HCT116 (cell line): ENCODE measurements at regions of chr12 and their contacts with region 1.

Region 1: GRCh38 chr12:98698603-98699463 is 53.7 kb downstream of the APAF1 start:
- DNase-seq: peak; percentile 31
- ATAC-seq: peak; percentile 98
- H3K4me3 ChIP-seq: no peak overlapping the region
- H3K27ac ChIP-seq: no peak overlapping the region
- H3K4me1 ChIP-seq: no peaks in the 10 kb centered on the region
- H3K27me3 ChIP-seq: no peaks in the 10 kb centered on the region
- CTCF ChIP-seq: peak; percentile 50 to 75 (median 75); a peak in 5 of 6 replicates
- POLR2A ChIP-seq: no peak
- RAD21 ChIP-seq: peak; percentile 60

Region 2: DNA sequence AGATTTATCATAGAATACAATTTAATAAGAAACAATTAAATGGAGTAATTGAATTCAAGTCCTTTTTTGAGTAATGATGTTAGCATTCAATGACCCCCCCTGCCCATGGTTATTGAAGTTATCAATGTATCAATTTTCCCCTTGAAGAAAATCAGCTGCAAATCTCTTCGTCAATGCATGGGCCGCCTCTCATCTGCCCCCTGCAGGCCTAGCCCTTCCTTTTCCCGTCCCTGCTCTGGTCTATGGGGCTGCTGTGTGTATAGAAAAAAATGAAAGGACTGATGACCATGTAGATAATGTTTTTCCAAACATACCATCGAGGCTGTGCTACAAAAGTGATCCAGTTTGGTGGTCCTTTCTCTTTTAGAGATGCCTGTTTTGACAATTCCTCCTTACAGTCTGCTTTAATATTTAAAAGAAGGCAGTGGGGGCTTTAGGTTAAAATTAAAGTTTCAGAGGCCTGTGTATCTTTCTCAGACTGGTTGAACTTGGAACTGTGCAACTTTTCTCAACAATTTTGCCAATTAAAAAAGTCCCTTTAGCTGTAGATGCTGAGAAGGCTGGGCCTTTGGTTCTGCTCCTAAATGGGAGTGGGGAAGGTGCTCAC is 44.6 kb after region 1 on chr12:
- CTCF ChIA-PET with region 1: no interaction called
- POLR2A ChIA-PET with region 1: no interaction called
- RAD21 ChIA-PET with region 1: no interaction called
- intact Hi-C with region 1: loop called (anchors 2 kb)
- DNase-seq: peak; percentile 21
- ATAC-seq: peak; percentile 97
- H3K4me3 ChIP-seq: no peak overlapping the region
- H3K27ac ChIP-seq: no peak overlapping the region
- H3K4me1 ChIP-seq: no peaks in the 10 kb centered on the region
- H3K27me3 ChIP-seq: peaks cover 28% of the 10 kb centered on the region; the same call in 1 of the 2 replicates
- CTCF ChIP-seq: peak; percentile 45 to 94 (median 91); a peak in 5 of 6 replicates
- POLR2A ChIP-seq: no peak
- RAD21 ChIP-seq: peak; percentile 46; the same call in 1 of the 2 replicates

Region 3: DNA sequence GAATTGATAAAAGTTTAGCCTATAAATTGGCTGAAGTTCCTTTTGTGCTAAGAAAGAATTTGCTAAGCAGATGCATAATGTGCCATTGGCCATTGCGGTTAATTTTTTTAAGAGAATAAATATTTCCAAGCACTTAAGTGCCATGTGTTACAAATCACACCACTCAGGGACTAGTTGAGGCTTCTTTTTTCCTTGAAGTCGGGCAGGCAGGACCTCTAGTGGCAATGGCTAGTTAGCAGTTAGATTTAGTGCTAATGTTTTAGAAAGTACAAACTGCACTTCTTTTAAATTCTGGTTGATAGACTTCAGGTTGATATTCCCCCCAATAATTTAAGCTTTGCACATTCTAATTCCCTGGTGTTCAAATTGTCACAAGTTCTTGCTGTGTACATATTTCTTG is 240.5 kb after region 1 on chr12:
- CTCF ChIA-PET with region 1: no interaction called
- POLR2A ChIA-PET with region 1: no interaction called
- RAD21 ChIA-PET with region 1: no interaction called
- intact Hi-C with region 1: loop called (anchors 2 kb)
- DNase-seq: peak; percentile 22
- ATAC-seq: peak; percentile 76
- H3K4me3 ChIP-seq: no peak overlapping the region
- H3K27ac ChIP-seq: no peak overlapping the region
- H3K4me1 ChIP-seq: no peaks in the 10 kb centered on the region
- H3K27me3 ChIP-seq: peaks cover 41% of the 10 kb centered on the region
- CTCF ChIP-seq: peak; percentile 48 to 67 (median 58); a peak in 5 of 6 replicates
- POLR2A ChIP-seq: no peak
- RAD21 ChIP-seq: peak; percentile 58